ENCODE measurements at regions of chr19 and their contacts with region 1.

Region 1: GRCh38 chr19:33241530-33242101 is 16.0 kb upstream of the SLC7A10 start:
- DNase-seq: peak; percentile 30 to 60 (median 48)
- ATAC-seq: peak; percentile 82
- H3K4me3 ChIP-seq: no peak overlapping the region
- H3K27ac ChIP-seq: no peak overlapping the region
- H3K4me1 ChIP-seq: peaks cover 0 to 17% of the 10 kb centered on the region in 2 experiments; a peak in 2 of 5 replicates
- H3K27me3 ChIP-seq: peaks cover 2 to 24% of the 10 kb centered on the region in 2 experiments; a peak in 3 of 5 replicates
- CTCF ChIP-seq: peak; percentile 65 to 73 (median 67)
- EP300 ChIP-seq: no peak
- POLR2A ChIP-seq: no peak
- RAD21 ChIP-seq: peak; percentile 85 to 94

Region 2: GRCh38 chr19:33161201-33161600 is 80.4 kb before region 1 on chr19:
- CTCF ChIA-PET with region 1: no interaction called
- POLR2A ChIA-PET with region 1: no interaction called
- in situ Hi-C with region 1: no loop called
- intact Hi-C with region 1: no loop called
- DNase-seq: no peak
- ATAC-seq: no peak
- H3K4me3 ChIP-seq: no peak overlapping the region
- H3K27ac ChIP-seq: no peak overlapping the region
- H3K4me1 ChIP-seq: no peaks in the 10 kb centered on the region; a peak in 1 of 5 replicates
- H3K27me3 ChIP-seq: no peaks in the 10 kb centered on the region
- CTCF ChIP-seq: no peak
- EP300 ChIP-seq: no peak
- POLR2A ChIP-seq: no peak
- RAD21 ChIP-seq: no peak

Region 3: DNA sequence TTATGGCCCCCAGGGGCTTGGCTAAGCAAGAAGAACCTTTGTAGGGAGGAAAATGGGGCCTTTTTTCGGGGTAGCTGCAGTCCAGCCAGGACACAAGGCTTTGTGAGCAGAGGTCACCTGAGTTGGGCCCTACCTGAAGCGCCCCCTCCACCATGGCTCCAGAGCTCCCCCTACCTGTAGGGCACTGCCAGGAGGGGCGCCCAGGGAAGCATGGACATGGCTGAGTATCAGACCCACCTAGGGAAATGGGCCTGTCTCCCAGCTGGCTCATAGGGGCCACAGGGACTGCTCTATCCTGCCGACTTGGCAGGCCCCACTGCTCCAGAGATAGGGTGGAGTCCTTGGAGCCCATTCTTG is 69.7 kb after region 1 on chr19:
- CTCF ChIA-PET with region 1: interaction called, 6 read pairs
- POLR2A ChIA-PET with region 1: no interaction called
- in situ Hi-C with region 1: no loop called
- intact Hi-C with region 1: loop called (anchors 5 kb)
- DNase-seq: peak in 2 of 4 experiments; percentile 29 to 39
- ATAC-seq: peak; percentile 86
- H3K4me3 ChIP-seq: no peak overlapping the region
- H3K27ac ChIP-seq: no peak overlapping the region
- H3K4me1 ChIP-seq: no peaks in the 10 kb centered on the region
- H3K27me3 ChIP-seq: peaks cover 4 to 28% of the 10 kb centered on the region in 2 experiments; a peak in 4 of 5 replicates
- CTCF ChIP-seq: peak; percentile 52 to 74 (median 67)
- EP300 ChIP-seq: no peak
- POLR2A ChIP-seq: no peak
- RAD21 ChIP-seq: peak in 1 of 2 experiments; percentile 67; a peak in 2 of 4 replicates

Measured in K562 (cell line).